ENCODE measurements at regions of chr3 and their contacts with region 1.

Region 1: GRCh38 chr3:149812606-149813366 is at the start of gene RNF13:
- DNase-seq: peak; percentile 98
- ATAC-seq: peak; percentile 95
- H3K4me3 Mint-ChIP-seq: peak within 1 kb of the TSS; percentile 90
- H3K27ac Mint-ChIP-seq: peak within 1 kb of the TSS; percentile 99
- H3K4me1 Mint-ChIP-seq: peaks cover 44% of the 10 kb centered on the region
- H3K27me3 Mint-ChIP-seq: peaks cover 3% of the 10 kb centered on the region
- CTCF ChIP-seq: no peak
- total RNA-seq, gene RNF13: 25.7 to 26.3 TPM

Region 2: GRCh38 chr3:149752051-149752787 is 60.6 kb before region 1 on chr3 and contains the start of gene COMMD2:
- CTCF ChIA-PET with region 1: interaction called, 27 read pairs
- POLR2A ChIA-PET with region 1: interaction called, 5 read pairs
- intact Hi-C with region 1: loop called (anchors 5 kb)
- DNase-seq: peak; percentile 89
- ATAC-seq: peak; percentile 100
- H3K4me3 Mint-ChIP-seq: peak within 1 kb of the TSS; percentile 86
- H3K27ac Mint-ChIP-seq: peak within 1 kb of the TSS; percentile 93
- H3K4me1 Mint-ChIP-seq: peaks cover 21% of the 10 kb centered on the region
- H3K27me3 Mint-ChIP-seq: no peaks in the 10 kb centered on the region
- CTCF ChIP-seq: peak; percentile 50
- total RNA-seq, gene COMMD2: 31.0 to 31.8 TPM

Region 3: GRCh38 chr3:149771652-149772271 is 41.0 kb before region 1 on chr3:
- CTCF ChIA-PET with region 1: interaction called, 16 read pairs
- POLR2A ChIA-PET with region 1: no interaction called
- intact Hi-C with region 1: no loop called
- DNase-seq: peak; percentile 62
- ATAC-seq: peak; percentile 61
- H3K4me3 Mint-ChIP-seq: no peak overlapping the region
- H3K27ac Mint-ChIP-seq: no peak overlapping the region
- H3K4me1 Mint-ChIP-seq: no peaks in the 10 kb centered on the region
- H3K27me3 Mint-ChIP-seq: peaks cover 9% of the 10 kb centered on the region
- CTCF ChIP-seq: peak; percentile 76

Region 4: DNA sequence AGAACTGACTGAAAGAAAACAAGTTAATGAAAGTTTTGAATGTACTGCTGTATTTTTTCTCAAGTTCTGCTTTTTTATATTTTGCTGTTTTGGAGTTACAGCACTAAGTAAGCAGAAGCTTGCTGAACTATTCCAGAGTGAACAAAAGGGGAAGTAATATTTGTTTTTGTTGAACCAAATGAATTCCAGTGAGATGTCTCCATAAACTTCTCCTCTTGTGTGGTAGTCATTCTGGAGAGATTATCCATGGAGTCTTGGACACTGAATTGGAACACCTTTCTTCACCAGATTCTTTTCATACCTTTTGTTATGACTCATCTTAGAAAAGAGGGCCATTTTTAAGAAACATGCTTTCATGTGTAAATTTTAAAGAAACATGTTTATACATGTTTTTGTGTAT is 29.2 kb before region 1 on chr3:
- CTCF ChIA-PET with region 1: interaction called, 12 read pairs
- POLR2A ChIA-PET with region 1: no interaction called
- intact Hi-C with region 1: no loop called
- DNase-seq: no peak
- ATAC-seq: no peak
- H3K4me3 Mint-ChIP-seq: no peak overlapping the region
- H3K27ac Mint-ChIP-seq: no peak overlapping the region
- H3K4me1 Mint-ChIP-seq: no peaks in the 10 kb centered on the region
- H3K27me3 Mint-ChIP-seq: peaks cover 7% of the 10 kb centered on the region
- CTCF ChIP-seq: no peak

Region 5: GRCh38 chr3:149792452-149793270 is 20.1 kb before region 1 on chr3 and contains the start of gene ANKUB1:
- CTCF ChIA-PET with region 1: interaction called, 13 read pairs
- POLR2A ChIA-PET with region 1: no interaction called
- intact Hi-C with region 1: no loop called
- DNase-seq: no peak
- ATAC-seq: no peak
- H3K4me3 Mint-ChIP-seq: no peak within 1 kb of the TSS
- H3K27ac Mint-ChIP-seq: no peak within 1 kb of the TSS
- H3K4me1 Mint-ChIP-seq: no peaks in the 10 kb centered on the region
- H3K27me3 Mint-ChIP-seq: peaks cover 10% of the 10 kb centered on the region
- CTCF ChIP-seq: no peak
- total RNA-seq, gene ANKUB1: not detected

Region 6: GRCh38 chr3:149800693-149801092 is 12.1 kb before region 1 on chr3:
- CTCF ChIA-PET with region 1: interaction called, 12 read pairs
- POLR2A ChIA-PET with region 1: no interaction called
- intact Hi-C with region 1: no loop called
- DNase-seq: no peak
- ATAC-seq: no peak
- H3K4me3 Mint-ChIP-seq: no peak overlapping the region
- H3K27ac Mint-ChIP-seq: no peak overlapping the region
- H3K4me1 Mint-ChIP-seq: no peaks in the 10 kb centered on the region
- H3K27me3 Mint-ChIP-seq: peaks cover 8% of the 10 kb centered on the region
- CTCF ChIP-seq: no peak

Region 7: DNA sequence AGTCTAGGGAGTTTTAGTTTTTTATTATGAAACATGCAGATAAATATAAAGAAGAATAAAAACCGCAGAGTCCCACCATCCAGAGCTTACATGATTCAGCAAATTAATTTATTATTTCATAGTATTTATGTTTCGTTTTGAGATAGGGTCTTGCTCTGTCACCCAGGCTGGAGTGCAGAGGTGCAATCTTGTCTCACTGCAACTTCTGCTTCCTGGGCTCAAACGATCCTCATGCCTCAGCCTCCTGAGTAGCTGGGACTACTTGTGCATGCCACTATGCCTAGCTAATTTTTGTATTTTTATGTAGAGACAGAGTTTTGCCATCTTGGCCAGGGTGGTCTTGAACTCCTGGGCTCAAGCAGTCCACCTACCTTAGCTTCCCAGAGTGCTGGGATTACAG is 13.8 kb after region 1 on chr3:
- CTCF ChIA-PET with region 1: interaction called, 51 read pairs
- POLR2A ChIA-PET with region 1: interaction called, 11 read pairs
- intact Hi-C with region 1: no loop called
- DNase-seq: no peak
- ATAC-seq: no peak
- H3K4me3 Mint-ChIP-seq: no peak overlapping the region
- H3K27ac Mint-ChIP-seq: no peak overlapping the region
- H3K4me1 Mint-ChIP-seq: peaks cover 20% of the 10 kb centered on the region
- H3K27me3 Mint-ChIP-seq: no peaks in the 10 kb centered on the region
- CTCF ChIP-seq: no peak

Measured in activated CD8-positive, alpha-beta T cell treated with anti-CD3 and anti-CD28 coated beads for 36 hours (primary cell).